BJ (cell line): ENCODE measurements at regions of chr1 and their contacts with region 1.

Region 1: GRCh38 chr1:171530676-171531075 is 45.3 kb downstream of the PRRC2C start:
- DNase-seq: no peak
- H3K4me3 ChIP-seq: no peak overlapping the region
- H3K27me3 ChIP-seq: no peaks in the 10 kb centered on the region
- CTCF ChIP-seq: no peak

Region 2: DNA sequence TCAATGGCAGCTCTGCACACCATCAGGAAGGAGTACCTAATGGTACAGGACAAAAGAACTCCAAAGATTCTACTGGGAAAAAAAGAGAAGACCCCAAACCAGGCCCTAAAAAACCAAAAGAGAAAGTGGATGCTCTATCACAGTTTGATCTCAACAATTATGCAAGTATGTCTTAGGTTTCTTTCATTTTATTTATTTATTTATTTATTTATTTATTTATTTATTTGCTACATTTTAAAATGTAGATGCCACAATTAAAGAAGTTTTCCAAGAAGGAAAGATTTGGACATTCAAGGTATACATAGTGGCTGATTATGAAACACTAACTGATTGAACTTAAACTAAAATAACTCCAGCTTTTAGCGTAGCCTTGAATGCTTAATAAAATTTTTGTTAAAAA is 14.8 kb after region 1 on chr1:
- CTCF ChIA-PET with region 1: interaction called, 3 read pairs
- POLR2A ChIA-PET with region 1: interaction called, 12 read pairs
- DNase-seq: no peak
- H3K4me3 ChIP-seq: no peak overlapping the region
- H3K27me3 ChIP-seq: no peaks in the 10 kb centered on the region
- CTCF ChIP-seq: no peak